ENCODE measurements at regions of chr3 and their contacts with region 1.

Region 1: DNA sequence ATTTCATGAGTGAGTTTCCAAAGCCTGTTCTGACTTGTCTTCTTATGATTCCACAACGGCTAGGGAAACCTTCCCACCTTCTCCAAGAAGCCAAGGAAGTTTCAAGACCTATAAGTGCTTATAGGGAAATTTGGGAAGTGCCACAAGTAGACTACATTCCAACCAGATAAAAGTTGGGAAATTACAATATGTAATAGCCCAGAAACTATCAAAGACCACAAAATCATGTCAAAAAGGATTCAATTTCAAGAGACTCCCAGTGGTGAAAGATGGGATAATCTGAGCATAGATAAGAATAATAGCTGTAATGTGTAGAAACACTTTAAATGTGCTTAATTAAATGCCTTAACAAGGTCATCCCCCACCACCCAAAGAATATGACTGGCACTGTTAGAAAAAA is 169.2 kb upstream of the SLC2A2 start:
- DNase-seq: no peak
- ATAC-seq: no peak

Region 2: GRCh38 chr3:171095063-171095462 is 100.6 kb before region 1 on chr3:
- intact Hi-C with region 1: no loop called
- DNase-seq: no peak
- ATAC-seq: no peak

Region 3: DNA sequence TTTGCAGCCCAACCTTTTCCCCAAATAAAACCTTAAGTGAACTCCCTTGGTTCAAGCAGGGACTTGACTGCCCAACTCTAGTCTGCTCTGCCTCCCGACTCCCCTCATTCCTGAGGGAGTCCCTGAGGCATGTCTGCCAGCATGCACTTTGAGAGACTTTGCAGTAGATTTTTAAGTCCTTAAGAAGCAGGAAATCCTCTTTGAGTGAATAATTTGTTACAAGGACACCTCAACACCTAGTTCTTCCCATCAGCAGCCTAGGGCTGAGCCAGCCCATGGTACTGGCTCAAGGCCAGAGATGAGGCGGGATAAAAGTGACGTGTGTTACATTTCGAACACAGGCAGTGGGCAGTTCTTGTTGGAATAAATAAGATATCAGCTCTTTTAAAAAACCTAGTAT is 35.2 kb after region 1 on chr3:
- intact Hi-C with region 1: loop called (anchors 5 kb)
- DNase-seq: no peak
- ATAC-seq: peak; percentile 40

Region 4: GRCh38 chr3:171309906-171310359 is 114.2 kb after region 1 on chr3:
- intact Hi-C with region 1: loop called (anchors 5 kb)
- DNase-seq: no peak
- ATAC-seq: no peak

Region 5: DNA sequence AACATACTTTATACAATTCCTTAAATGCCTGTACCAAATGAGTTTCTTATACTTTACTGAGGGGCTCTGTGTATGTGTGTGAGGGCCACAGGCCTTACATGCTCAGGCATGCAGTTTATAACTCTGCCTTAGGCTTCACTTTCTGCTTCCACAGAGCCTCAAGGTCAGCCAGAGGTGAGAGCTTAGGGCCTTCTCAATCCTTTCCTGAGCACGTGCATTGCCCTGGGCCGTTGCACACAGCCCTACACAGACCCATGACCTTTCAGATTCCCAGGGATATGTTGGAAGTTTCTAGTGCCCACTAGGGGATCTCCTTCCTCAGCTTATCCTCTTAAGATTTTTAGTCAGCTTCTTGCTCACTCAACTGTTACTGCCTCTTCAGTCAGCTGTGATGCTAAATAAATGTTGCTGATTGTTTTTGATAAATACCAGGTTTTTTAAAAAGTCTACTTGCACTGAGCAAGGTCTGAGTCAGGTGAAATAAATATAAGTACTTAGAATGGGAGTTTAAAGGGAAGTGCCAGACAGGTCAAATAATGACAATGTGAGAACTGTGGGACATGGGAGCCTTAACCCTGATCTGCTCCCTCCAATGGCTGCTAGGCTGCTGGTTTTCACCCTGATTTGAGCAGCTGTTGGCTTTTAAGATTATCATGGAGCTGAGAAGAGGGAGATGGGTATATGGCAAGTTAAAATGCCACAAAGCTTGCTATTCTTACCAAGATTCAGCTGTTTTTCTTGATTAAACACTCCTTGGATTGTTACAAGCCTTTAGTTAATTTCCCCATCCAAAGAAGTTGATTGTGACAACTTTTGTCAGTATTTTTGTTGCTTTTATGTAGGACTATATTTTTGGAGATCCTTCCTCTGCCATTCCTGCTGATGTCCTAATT is 445.1 kb after region 1 on chr3:
- intact Hi-C with region 1: no loop called
- DNase-seq: no peak
- ATAC-seq: peak; percentile 55